Activated T-helper 1 cell treated with anti-CD3 and anti-CD28 coated beads, Interleukin-12 subunit alpha, Interleukin-12 subunit beta, Interleukin-2, Interleukin-4 antibody, amounts not matched to agents 30 ng/mL and 10 ng/mL and 1 ng/mL, durations not matched to agents 14 hours and 24 hours and 36 hours (primary cell): ENCODE measurements at regions of chr18 and their contacts with region 1.

Region 1: GRCh38 chr18:46040747-46041104 is 31.3 kb downstream of the PSTPIP2 start:
- DNase-seq: no peak
- H3K4me3 Mint-ChIP-seq: no peak overlapping the region
- H3K27ac Mint-ChIP-seq: no peak overlapping the region
- H3K4me1 Mint-ChIP-seq: peaks cover 34% of the 10 kb centered on the region
- H3K27me3 Mint-ChIP-seq: no peaks in the 10 kb centered on the region

Region 2: GRCh38 chr18:46054956-46055837 is 14.5 kb after region 1 on chr18:
- intact Hi-C with region 1: loop called (anchors 2 kb)
- DNase-seq: no peak
- H3K4me3 Mint-ChIP-seq: peak overlapping the region; percentile 40
- H3K27ac Mint-ChIP-seq: peak overlapping the region; percentile 57
- H3K4me1 Mint-ChIP-seq: peaks cover 36% of the 10 kb centered on the region
- H3K27me3 Mint-ChIP-seq: no peaks in the 10 kb centered on the region